K562 (cell line): ENCODE measurements at regions of chr6 and their contacts with region 1.

Region 1: GRCh38 chr6:166333172-166333995 is 9.0 kb downstream of the SFT2D1 start:
- DNase-seq: no peak
- ATAC-seq: no peak
- H3K4me3 ChIP-seq: no peak overlapping the region
- H3K27ac ChIP-seq: no peak overlapping the region
- H3K4me1 ChIP-seq: peaks cover 5 to 14% of the 10 kb centered on the region in 2 experiments; a peak in 4 of 5 replicates
- H3K27me3 ChIP-seq: no peaks in the 10 kb centered on the region
- CTCF ChIP-seq: no peak
- EP300 ChIP-seq: no peak
- POLR2A ChIP-seq: peak; percentile 54
- RAD21 ChIP-seq: no peak

Region 2: GRCh38 chr6:166313255-166314070 is 19.9 kb before region 1 on chr6:
- CTCF ChIA-PET with region 1: no interaction called
- POLR2A ChIA-PET with region 1: interaction called, 4 read pairs
- in situ Hi-C with region 1: no loop called
- intact Hi-C with region 1: loop called (anchors 2 kb)
- DNase-seq: peak; percentile 79 to 85 (median 82)
- ATAC-seq: peak; percentile 92
- H3K4me3 ChIP-seq: no peak overlapping the region
- H3K27ac ChIP-seq: no peak overlapping the region
- H3K4me1 ChIP-seq: peaks cover 0 to 4% of the 10 kb centered on the region in 2 experiments; a peak in 2 of 5 replicates
- H3K27me3 ChIP-seq: peaks cover 13 to 22% of the 10 kb centered on the region in 2 experiments
- CTCF ChIP-seq: peak; percentile 88 to 90 (median 89)
- EP300 ChIP-seq: 0 out of 2 replicates have a peak, but pooled peaks have one; percentile 7
- POLR2A ChIP-seq: no peak
- RAD21 ChIP-seq: peak; percentile 77 to 89